ENCODE measurements at regions of chr2 and their contacts with region 1.

Region 1: DNA sequence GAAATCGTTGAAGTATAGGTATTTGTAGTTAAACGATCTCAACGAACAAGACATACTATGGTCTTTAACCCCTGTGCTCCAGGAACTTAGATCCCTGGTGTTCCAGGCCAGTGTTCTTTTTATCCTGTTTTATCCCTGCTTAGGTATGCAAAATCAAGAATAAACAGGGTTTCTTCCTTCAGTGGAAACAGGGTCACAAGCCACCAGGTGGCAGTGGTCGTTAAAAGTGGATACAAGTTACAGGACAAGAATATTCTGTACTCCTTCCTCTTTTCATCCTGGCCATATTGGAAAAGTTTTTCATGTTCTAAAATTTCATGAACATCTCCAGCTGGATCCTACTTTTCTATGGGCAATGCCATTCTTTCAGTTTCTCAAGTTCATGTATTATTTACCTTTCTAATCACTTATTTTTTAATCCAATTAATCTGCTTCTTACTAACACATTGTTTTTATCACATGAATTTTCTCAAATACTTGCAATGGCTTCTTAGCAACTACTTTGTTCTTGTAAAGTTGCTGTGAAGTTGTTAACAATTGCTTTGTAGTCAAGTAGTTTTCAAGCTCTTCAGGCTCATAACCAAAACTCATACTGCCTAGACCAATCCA is 16.4 kb upstream of the HNMT start:
- DNase-seq: peak; percentile 70 to 94 (median 81)
- H3K4me3 ChIP-seq: no peak overlapping the region
- H3K27ac ChIP-seq: no peak overlapping the region
- H3K4me1 ChIP-seq: no peaks in the 10 kb centered on the region
- H3K27me3 ChIP-seq: no peaks in the 10 kb centered on the region
- CTCF ChIP-seq: peak; percentile 61 to 77 (median 74)
- POLR2A ChIP-seq: no peak

Region 2: GRCh38 chr2:138090330-138090729 is 142.5 kb after region 1 on chr2:
- intact Hi-C with region 1: loop called (anchors 5 to 10 kb)
- DNase-seq: peak in 2 of 7 donors; percentile 6 to 54
- H3K4me3 ChIP-seq: no peak overlapping the region
- H3K27ac ChIP-seq: no peak overlapping the region
- H3K4me1 ChIP-seq: peaks cover 0 to 4% of the 10 kb centered on the region in 2 donors
- H3K27me3 ChIP-seq: no peaks in the 10 kb centered on the region
- CTCF ChIP-seq: peak; percentile 49 to 68 (median 66)
- POLR2A ChIP-seq: no peak

Region 3: GRCh38 chr2:138137949-138138348 is 190.1 kb after region 1 on chr2:
- intact Hi-C with region 1: no loop called
- DNase-seq: no peak
- H3K4me3 ChIP-seq: no peak overlapping the region
- H3K27ac ChIP-seq: no peak overlapping the region
- H3K4me1 ChIP-seq: no peaks in the 10 kb centered on the region
- H3K27me3 ChIP-seq: no peaks in the 10 kb centered on the region
- CTCF ChIP-seq: no peak
- POLR2A ChIP-seq: no peak

Region 4: DNA sequence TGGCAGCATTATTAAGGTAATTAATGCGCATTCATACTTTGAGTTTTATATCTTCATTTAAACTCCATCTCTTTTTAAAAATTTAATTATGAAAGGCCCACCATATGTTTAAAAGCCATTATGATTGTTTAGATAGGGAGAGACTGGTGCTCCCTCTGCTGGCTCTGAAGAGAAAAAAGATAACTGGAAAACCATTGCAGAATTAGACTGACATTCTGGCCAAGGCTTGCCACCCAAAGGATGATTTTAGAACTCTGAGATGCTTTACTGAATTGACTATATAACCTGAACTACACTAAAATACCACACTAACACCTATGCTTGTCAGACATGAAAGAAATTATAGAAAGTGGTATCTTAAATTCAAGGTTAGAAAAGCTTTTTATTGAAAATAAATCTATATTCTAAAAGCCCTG is 426.2 kb after region 1 on chr2:
- intact Hi-C with region 1: loop called in 1 of 2 experiments (anchors 10 kb)
- DNase-seq: peak in 2 of 7 donors; percentile 15 to 27
- H3K4me3 ChIP-seq: no peak overlapping the region
- H3K27ac ChIP-seq: no peak overlapping the region
- H3K4me1 ChIP-seq: no peaks in the 10 kb centered on the region
- H3K27me3 ChIP-seq: no peaks in the 10 kb centered on the region
- CTCF ChIP-seq: peak; percentile 33 to 79 (median 62)
- POLR2A ChIP-seq: no peak

Region 5: GRCh38 chr2:138787053-138787666 is 839.3 kb after region 1 on chr2:
- intact Hi-C with region 1: loop called in 1 of 2 experiments (anchors 10 kb)
- DNase-seq: peak in 3 of 7 donors; percentile 35 to 56 (median 41)
- H3K4me3 ChIP-seq: no peak overlapping the region
- H3K27ac ChIP-seq: no peak overlapping the region
- H3K4me1 ChIP-seq: no peaks in the 10 kb centered on the region
- H3K27me3 ChIP-seq: peaks cover 6% of the 10 kb centered on the region
- CTCF ChIP-seq: peak; percentile 49 to 81 (median 78)
- POLR2A ChIP-seq: no peak